B cell (primary cell): ENCODE measurements at regions of chr14 and their contacts with region 1.

Region 1: DNA sequence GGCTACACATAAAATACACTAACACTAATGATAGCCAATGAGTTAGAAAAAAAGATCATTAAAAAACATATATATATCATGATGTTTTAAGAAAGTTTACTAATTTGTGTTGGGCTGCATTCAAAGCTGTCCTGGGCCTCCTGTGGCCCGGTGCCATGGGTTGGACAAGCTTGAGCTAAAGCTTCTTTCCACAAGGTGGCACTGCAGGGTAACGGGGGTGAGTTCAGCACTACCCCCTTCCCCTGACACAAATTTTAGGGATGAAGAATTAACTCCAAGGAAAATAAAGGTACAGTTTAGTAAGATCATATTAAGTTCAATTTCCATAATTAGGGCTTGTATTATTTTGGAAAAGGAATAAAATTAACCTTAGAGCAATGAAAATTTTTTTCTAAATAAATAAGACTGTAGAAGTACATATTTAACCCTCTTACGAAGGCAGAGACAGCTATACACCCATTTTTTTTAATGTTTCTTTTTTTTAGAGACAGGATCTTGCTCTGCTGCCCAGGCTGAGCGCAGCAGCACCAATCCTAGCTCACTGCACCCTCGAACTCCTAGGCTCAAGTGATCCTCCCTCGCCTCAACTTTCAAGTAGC is 38.9 kb downstream of the PPP1R13B start:
- DNase-seq: peak; percentile 74
- ATAC-seq: peak; percentile 74
- H3K4me3 ChIP-seq: no peak overlapping the region
- H3K4me3 Mint-ChIP-seq: no peak overlapping the region
- H3K27ac ChIP-seq: no peak overlapping the region
- H3K27ac Mint-ChIP-seq: no peak overlapping the region
- H3K4me1 ChIP-seq: peaks cover 3 to 4% of the 10 kb centered on the region in 2 donors
- H3K4me1 Mint-ChIP-seq: peaks cover 17% of the 10 kb centered on the region
- H3K27me3 ChIP-seq: no peaks in the 10 kb centered on the region
- H3K27me3 Mint-ChIP-seq: no peaks in the 10 kb centered on the region
- CTCF ChIP-seq: peak; percentile 98

Region 2: GRCh38 chr14:103333754-103334643 is 474.5 kb before region 1 on chr14 and contains the start of gene EIF5:
- CTCF ChIA-PET with region 1: no interaction called
- POLR2A ChIA-PET with region 1: no interaction called
- intact Hi-C with region 1: no loop called
- DNase-seq: peak; percentile 100
- ATAC-seq: peak; percentile 85
- H3K4me3 ChIP-seq: peak within 1 kb of the TSS; percentile 78 to 100 (median 94)
- H3K4me3 Mint-ChIP-seq: peak within 1 kb of the TSS; percentile 96
- H3K27ac ChIP-seq: peak within 1 kb of the TSS; percentile 98 to 99
- H3K27ac Mint-ChIP-seq: peak within 1 kb of the TSS; percentile 100
- H3K4me1 ChIP-seq: peaks cover 17 to 25% of the 10 kb centered on the region in 2 donors
- H3K4me1 Mint-ChIP-seq: peaks cover 42% of the 10 kb centered on the region
- H3K27me3 ChIP-seq: no peaks in the 10 kb centered on the region
- H3K27me3 Mint-ChIP-seq: no peaks in the 10 kb centered on the region
- CTCF ChIP-seq: peak; percentile 51
- total RNA-seq, gene EIF5: 314 TPM in 2 replicates

Region 3: GRCh38 chr14:103828315-103828967 is 19.9 kb after region 1 on chr14:
- CTCF ChIA-PET with region 1: interaction called, 10 read pairs
- POLR2A ChIA-PET with region 1: no interaction called
- intact Hi-C with region 1: no loop called
- DNase-seq: no peak
- ATAC-seq: no peak
- H3K4me3 ChIP-seq: no peak overlapping the region
- H3K4me3 Mint-ChIP-seq: no peak overlapping the region
- H3K27ac ChIP-seq: no peak overlapping the region
- H3K27ac Mint-ChIP-seq: no peak overlapping the region
- H3K4me1 ChIP-seq: no peaks in the 10 kb centered on the region
- H3K4me1 Mint-ChIP-seq: peaks cover 8% of the 10 kb centered on the region
- H3K27me3 ChIP-seq: no peaks in the 10 kb centered on the region
- H3K27me3 Mint-ChIP-seq: no peaks in the 10 kb centered on the region
- CTCF ChIP-seq: no peak

Region 4: GRCh38 chr14:103899316-103899715 is 90.8 kb after region 1 on chr14:
- CTCF ChIA-PET with region 1: interaction called, 13 read pairs
- POLR2A ChIA-PET with region 1: no interaction called
- intact Hi-C with region 1: no loop called
- DNase-seq: no peak
- ATAC-seq: no peak
- H3K4me3 ChIP-seq: no peak overlapping the region
- H3K4me3 Mint-ChIP-seq: no peak overlapping the region
- H3K27ac ChIP-seq: no peak overlapping the region
- H3K27ac Mint-ChIP-seq: no peak overlapping the region
- H3K4me1 ChIP-seq: peaks cover 0 to 3% of the 10 kb centered on the region in 2 donors
- H3K4me1 Mint-ChIP-seq: peaks cover 3% of the 10 kb centered on the region
- H3K27me3 ChIP-seq: no peaks in the 10 kb centered on the region
- H3K27me3 Mint-ChIP-seq: peaks cover 11% of the 10 kb centered on the region
- CTCF ChIP-seq: no peak

Region 5: GRCh38 chr14:103920981-103921854 is 112.7 kb after region 1 on chr14:
- CTCF ChIA-PET with region 1: interaction called, 12 read pairs
- POLR2A ChIA-PET with region 1: no interaction called
- intact Hi-C with region 1: no loop called
- DNase-seq: peak; percentile 95
- ATAC-seq: peak; percentile 100
- H3K4me3 ChIP-seq: peak overlapping the region; percentile 62 to 92 (median 84)
- H3K4me3 Mint-ChIP-seq: peak overlapping the region; percentile 90
- H3K27ac ChIP-seq: peak overlapping the region; percentile 39 to 77
- H3K27ac Mint-ChIP-seq: peak overlapping the region; percentile 77
- H3K4me1 ChIP-seq: peaks cover 6 to 12% of the 10 kb centered on the region in 2 donors
- H3K4me1 Mint-ChIP-seq: peaks cover 15% of the 10 kb centered on the region
- H3K27me3 ChIP-seq: peaks cover 0 to 5% (median 1%) of the 10 kb centered on the region in 4 experiments
- H3K27me3 Mint-ChIP-seq: no peaks in the 10 kb centered on the region
- CTCF ChIP-seq: peak; percentile 95

Region 6: GRCh38 chr14:103984196-103984595 is 175.7 kb after region 1 on chr14:
- CTCF ChIA-PET with region 1: interaction called, 56 read pairs
- POLR2A ChIA-PET with region 1: no interaction called
- intact Hi-C with region 1: loop called (anchors 1 kb)
- DNase-seq: no peak
- ATAC-seq: no peak
- H3K4me3 ChIP-seq: no peak overlapping the region
- H3K4me3 Mint-ChIP-seq: no peak overlapping the region
- H3K27ac ChIP-seq: no peak overlapping the region
- H3K27ac Mint-ChIP-seq: no peak overlapping the region
- H3K4me1 ChIP-seq: no peaks in the 10 kb centered on the region
- H3K4me1 Mint-ChIP-seq: no peaks in the 10 kb centered on the region
- H3K27me3 ChIP-seq: no peaks in the 10 kb centered on the region
- H3K27me3 Mint-ChIP-seq: peaks cover 33% of the 10 kb centered on the region
- CTCF ChIP-seq: no peak

Region 7: DNA sequence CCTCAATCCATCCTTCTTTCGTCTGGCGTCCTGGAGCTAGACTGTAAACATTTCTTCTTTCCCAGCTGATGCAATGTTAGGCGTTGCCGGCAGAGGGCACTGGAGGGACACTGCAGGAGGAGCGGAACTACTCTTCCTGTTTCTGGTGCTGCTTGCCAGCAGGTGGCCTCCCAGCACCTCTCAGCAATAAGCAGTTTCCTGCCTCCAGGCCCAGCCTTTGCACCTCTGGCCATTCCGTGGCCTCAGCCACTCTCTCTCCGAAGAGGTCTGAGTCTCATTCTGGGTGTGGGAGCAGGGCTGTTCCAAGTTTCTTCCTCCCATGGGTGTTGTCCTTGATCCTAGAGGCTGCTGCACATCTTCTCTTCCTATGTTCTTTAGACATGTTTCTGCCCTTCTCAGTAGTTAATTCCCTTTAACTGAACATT is 269.5 kb after region 1 on chr14:
- CTCF ChIA-PET with region 1: interaction called, 18 read pairs
- POLR2A ChIA-PET with region 1: no interaction called
- intact Hi-C with region 1: no loop called
- DNase-seq: peak; percentile 88
- ATAC-seq: peak; percentile 98
- H3K4me3 ChIP-seq: no peak overlapping the region
- H3K4me3 Mint-ChIP-seq: no peak overlapping the region
- H3K27ac ChIP-seq: no peak overlapping the region
- H3K27ac Mint-ChIP-seq: no peak overlapping the region
- H3K4me1 ChIP-seq: peaks cover 4 to 8% of the 10 kb centered on the region in 2 donors
- H3K4me1 Mint-ChIP-seq: peaks cover 6% of the 10 kb centered on the region
- H3K27me3 ChIP-seq: no peaks in the 10 kb centered on the region
- H3K27me3 Mint-ChIP-seq: peaks cover 17% of the 10 kb centered on the region
- CTCF ChIP-seq: peak; percentile 100